ENCODE measurements at regions of chr3 and their contacts with region 1.

Region 1: GRCh38 chr3:187679638-187680396 is 9.6 kb upstream of the SST start:
- DNase-seq: peak; percentile 73
- ATAC-seq: peak; percentile 98
- H3K4me3 ChIP-seq: no peak overlapping the region
- H3K27ac ChIP-seq: no peak overlapping the region
- H3K4me1 ChIP-seq: peaks cover 8% of the 10 kb centered on the region
- H3K27me3 ChIP-seq: no peaks in the 10 kb centered on the region
- CTCF ChIP-seq: peak; percentile 93
- EP300 ChIP-seq: no peak
- POLR2A ChIP-seq: no peak
- RAD21 ChIP-seq: peak; percentile 78

Region 2: GRCh38 chr3:187227658-187228258 is 452.1 kb before region 1 on chr3:
- CTCF ChIA-PET with region 1: interaction called, 4 read pairs
- POLR2A ChIA-PET with region 1: no interaction called
- in situ Hi-C with region 1: loop called (anchors 5 kb)
- intact Hi-C with region 1: no loop called
- DNase-seq: no peak
- ATAC-seq: peak; percentile 16; the same call in 2 of the 3 replicates
- H3K4me3 ChIP-seq: no peak overlapping the region
- H3K27ac ChIP-seq: no peak overlapping the region
- H3K4me1 ChIP-seq: peaks cover 11% of the 10 kb centered on the region
- H3K27me3 ChIP-seq: no peaks in the 10 kb centered on the region
- CTCF ChIP-seq: no peak
- EP300 ChIP-seq: no peak
- POLR2A ChIP-seq: no peak
- RAD21 ChIP-seq: no peak

Region 3: GRCh38 chr3:187255314-187255713 is 424.5 kb before region 1 on chr3:
- CTCF ChIA-PET with region 1: no interaction called
- POLR2A ChIA-PET with region 1: no interaction called
- in situ Hi-C with region 1: no loop called
- intact Hi-C with region 1: no loop called
- DNase-seq: no peak
- ATAC-seq: no peak
- H3K4me3 ChIP-seq: no peak overlapping the region
- H3K27ac ChIP-seq: no peak overlapping the region
- H3K4me1 ChIP-seq: no peaks in the 10 kb centered on the region
- H3K27me3 ChIP-seq: no peaks in the 10 kb centered on the region
- CTCF ChIP-seq: no peak
- EP300 ChIP-seq: no peak
- POLR2A ChIP-seq: no peak
- RAD21 ChIP-seq: no peak

Region 4: DNA sequence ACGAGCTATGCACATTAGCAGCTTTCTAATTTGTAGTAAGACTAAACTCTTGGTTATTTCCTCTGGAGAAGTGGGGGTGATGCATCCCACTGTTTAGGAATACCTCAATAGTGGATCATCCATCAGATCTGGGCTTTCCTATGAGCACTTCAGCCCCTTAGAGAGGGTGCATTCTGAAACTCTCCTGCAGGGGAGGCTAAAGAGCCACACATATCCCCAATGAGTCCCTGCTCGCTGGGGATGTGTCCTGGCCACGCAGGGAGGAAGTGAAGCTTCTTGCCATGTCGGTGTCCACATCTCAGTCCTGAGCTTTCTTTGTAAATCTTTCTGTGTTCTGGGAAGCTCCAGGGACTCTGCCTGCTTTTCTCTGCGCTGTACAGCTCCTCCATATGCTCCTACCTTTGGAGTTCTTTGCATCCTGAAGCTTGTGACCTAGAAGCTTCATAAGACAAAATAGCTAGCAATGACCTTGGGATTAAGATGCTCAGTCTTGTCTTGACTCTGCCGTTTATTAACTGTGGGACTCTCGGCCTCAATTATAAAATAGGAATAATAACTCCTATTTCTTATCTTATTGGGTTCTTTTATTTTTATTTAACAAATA is 360.0 kb before region 1 on chr3:
- CTCF ChIA-PET with region 1: interaction called, 71 read pairs
- POLR2A ChIA-PET with region 1: interaction called, 5 read pairs
- in situ Hi-C with region 1: loop called (anchors 5 kb)
- intact Hi-C with region 1: loop called (anchors 1 kb)
- DNase-seq: peak; percentile 35
- ATAC-seq: peak; percentile 94
- H3K4me3 ChIP-seq: no peak overlapping the region
- H3K27ac ChIP-seq: no peak overlapping the region
- H3K4me1 ChIP-seq: no peaks in the 10 kb centered on the region
- H3K27me3 ChIP-seq: 0 out of 5 replicates have a peak, but pooled peaks cover 0 to 5% of the 10 kb centered on the region in 2 experiments
- CTCF ChIP-seq: peak; percentile 70
- EP300 ChIP-seq: no peak
- POLR2A ChIP-seq: no peak
- RAD21 ChIP-seq: peak; percentile 54

Region 5: DNA sequence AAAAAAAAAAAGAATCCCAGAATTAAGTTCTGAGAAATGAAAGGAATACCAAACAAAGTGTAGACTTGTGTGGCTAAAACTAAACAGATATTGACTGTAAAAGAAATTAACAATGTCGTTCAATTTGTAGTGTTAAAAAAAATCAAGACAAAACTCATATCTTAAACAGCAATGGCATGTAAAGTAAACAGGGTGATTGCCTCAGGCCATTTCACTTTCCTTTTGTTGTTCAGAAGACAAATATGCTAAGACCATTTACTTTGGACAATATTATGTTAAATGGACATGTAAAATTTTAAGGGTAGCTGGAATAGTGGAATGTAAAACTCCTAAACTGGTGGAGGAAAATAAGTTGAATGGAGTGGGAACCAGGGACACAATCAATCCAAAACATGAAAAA is 172.5 kb before region 1 on chr3:
- CTCF ChIA-PET with region 1: no interaction called
- POLR2A ChIA-PET with region 1: no interaction called
- in situ Hi-C with region 1: no loop called
- intact Hi-C with region 1: loop called (anchors 2 kb)
- DNase-seq: no peak
- ATAC-seq: no peak
- H3K4me3 ChIP-seq: no peak overlapping the region
- H3K27ac ChIP-seq: no peak overlapping the region
- H3K4me1 ChIP-seq: peaks cover 11% of the 10 kb centered on the region; the same call in 1 of the 2 replicates
- H3K27me3 ChIP-seq: no peaks in the 10 kb centered on the region; a peak in 1 of 5 replicates
- CTCF ChIP-seq: no peak
- EP300 ChIP-seq: no peak
- POLR2A ChIP-seq: no peak
- RAD21 ChIP-seq: no peak

Region 6: GRCh38 chr3:187616307-187616972 is 63.4 kb before region 1 on chr3:
- CTCF ChIA-PET with region 1: interaction called, 30 read pairs
- POLR2A ChIA-PET with region 1: no interaction called
- in situ Hi-C with region 1: loop called (anchors 5 kb)
- intact Hi-C with region 1: loop called (anchors 1 kb)
- DNase-seq: peak; percentile 35
- ATAC-seq: peak; percentile 79
- H3K4me3 ChIP-seq: no peak overlapping the region
- H3K27ac ChIP-seq: no peak overlapping the region
- H3K4me1 ChIP-seq: no peaks in the 10 kb centered on the region
- H3K27me3 ChIP-seq: no peaks in the 10 kb centered on the region
- CTCF ChIP-seq: peak; percentile 74
- EP300 ChIP-seq: no peak
- POLR2A ChIP-seq: no peak
- RAD21 ChIP-seq: peak; percentile 38; the same call in 1 of the 2 replicates

Region 7: DNA sequence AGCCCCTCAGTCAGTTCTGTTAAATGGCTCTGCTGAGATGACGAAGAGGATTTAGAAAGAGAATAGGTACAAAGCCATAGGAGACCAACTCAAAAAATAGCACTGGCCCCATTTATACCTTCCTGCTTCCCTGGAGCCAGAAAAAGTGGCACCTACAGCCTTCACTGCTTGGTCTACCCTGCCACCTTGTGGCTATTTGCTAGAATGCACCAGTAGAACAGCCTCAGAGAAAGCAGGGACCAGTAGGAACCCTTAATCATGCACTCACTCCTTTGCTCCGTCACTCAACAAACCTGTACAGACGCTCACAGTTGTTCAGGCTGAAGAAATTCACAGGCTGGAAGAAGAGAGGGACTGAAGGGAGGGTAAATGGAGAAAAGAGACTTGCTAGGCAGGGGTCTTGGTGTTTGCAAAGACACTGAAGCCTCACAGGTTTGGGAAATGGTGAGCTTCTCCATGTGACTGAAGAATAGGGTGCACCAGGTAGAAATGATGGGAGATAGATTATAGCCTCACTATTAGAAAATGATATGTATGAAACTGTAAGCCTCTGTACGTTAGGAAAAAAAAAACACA is 34.7 kb after region 1 on chr3:
- CTCF ChIA-PET with region 1: interaction called, 11 read pairs
- POLR2A ChIA-PET with region 1: no interaction called
- in situ Hi-C with region 1: no loop called
- intact Hi-C with region 1: loop called (anchors 1 kb)
- DNase-seq: peak; percentile 74
- ATAC-seq: peak; percentile 84
- H3K4me3 ChIP-seq: peak overlapping the region in 2 of 3 experiments; percentile 35 to 51; a peak in 4 of 6 replicates
- H3K27ac ChIP-seq: no peak overlapping the region
- H3K4me1 ChIP-seq: peaks cover 30% of the 10 kb centered on the region
- H3K27me3 ChIP-seq: no peaks in the 10 kb centered on the region
- CTCF ChIP-seq: peak; percentile 95
- EP300 ChIP-seq: no peak
- POLR2A ChIP-seq: no peak
- RAD21 ChIP-seq: peak; percentile 87

Measured in HepG2 (cell line).